HEK293T (cell line): ENCODE measurements at regions of chr19 and their contacts with region 1.

Region 1: GRCh38 chr19:18364826-18365528 is 21.0 kb upstream of the GDF15 start:
- DNase-seq: peak; percentile 48

Region 2: GRCh38 chr19:18388100-18388959 is 23.4 kb after region 1 on chr19:
- CTCF ChIA-PET with region 1: interaction called, 10 read pairs
- POLR2A ChIA-PET with region 1: no interaction called
- DNase-seq: peak; percentile 94